ENCODE measurements at regions of chr4 and their contacts with region 1.

Region 1: DNA sequence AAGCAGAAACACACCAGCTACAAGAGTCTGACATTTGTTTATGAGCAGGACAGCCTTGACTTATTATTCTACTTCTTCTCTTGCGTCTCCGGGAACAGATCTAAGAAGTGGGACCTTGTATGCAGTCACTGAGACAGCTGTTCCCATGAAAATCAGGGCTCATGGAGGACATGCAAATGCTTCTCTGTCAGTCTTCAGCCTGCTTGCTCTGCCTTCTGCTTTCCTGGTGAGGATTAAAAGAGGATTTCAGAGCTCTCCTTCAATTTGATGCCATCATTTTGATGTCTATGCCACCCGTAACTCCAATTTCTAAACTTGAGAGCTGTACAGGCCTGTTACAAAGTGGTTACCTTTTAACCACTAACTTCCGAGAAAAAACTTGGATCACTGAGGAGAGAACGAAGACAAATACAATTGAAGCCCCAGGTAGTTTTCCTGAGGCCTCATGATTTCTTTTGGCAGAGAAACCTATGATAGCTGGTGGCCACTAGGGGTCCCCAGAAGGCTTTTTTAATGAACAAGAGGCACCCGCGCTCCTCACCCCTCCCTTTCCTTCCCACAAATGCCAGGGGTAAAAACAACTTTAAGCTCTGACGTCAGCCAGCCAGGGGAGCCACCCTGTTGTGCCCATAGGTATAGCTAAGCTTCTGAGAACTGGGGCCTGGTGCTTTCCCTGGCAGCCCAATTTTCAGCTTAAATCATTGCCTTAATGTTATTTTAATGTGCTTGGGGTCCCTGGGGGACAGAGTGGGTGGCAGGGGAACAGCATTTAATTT is 97.0 kb downstream of the DDIT4L start:
- DNase-seq: peak; percentile 73 to 86
- ATAC-seq: peak; percentile 91 to 95 (median 94)
- H3K4me3 ChIP-seq: no peak overlapping the region
- H3K27ac ChIP-seq: peak overlapping the region; percentile 81
- H3K4me1 ChIP-seq: peaks cover 26% of the 10 kb centered on the region
- H3K27me3 ChIP-seq: no peaks in the 10 kb centered on the region
- CTCF ChIP-seq: peak; percentile 84

Region 2: GRCh38 chr4:100189820-100190642 is 96.8 kb after region 1 on chr4 and contains the start of gene DDIT4L:
- intact Hi-C with region 1: loop called in 1 of 2 experiments (anchors 5 kb)
- DNase-seq: peak; percentile 69 to 84
- ATAC-seq: peak; percentile 83 to 87 (median 85)
- H3K4me3 ChIP-seq: peak within 1 kb of the TSS; percentile 90
- H3K27ac ChIP-seq: peak within 1 kb of the TSS; percentile 89
- H3K4me1 ChIP-seq: peaks cover 18% of the 10 kb centered on the region
- H3K27me3 ChIP-seq: no peaks in the 10 kb centered on the region
- CTCF ChIP-seq: no peak
- total RNA-seq, gene DDIT4L: 101 to 403 (median 275) TPM

Region 3: DNA sequence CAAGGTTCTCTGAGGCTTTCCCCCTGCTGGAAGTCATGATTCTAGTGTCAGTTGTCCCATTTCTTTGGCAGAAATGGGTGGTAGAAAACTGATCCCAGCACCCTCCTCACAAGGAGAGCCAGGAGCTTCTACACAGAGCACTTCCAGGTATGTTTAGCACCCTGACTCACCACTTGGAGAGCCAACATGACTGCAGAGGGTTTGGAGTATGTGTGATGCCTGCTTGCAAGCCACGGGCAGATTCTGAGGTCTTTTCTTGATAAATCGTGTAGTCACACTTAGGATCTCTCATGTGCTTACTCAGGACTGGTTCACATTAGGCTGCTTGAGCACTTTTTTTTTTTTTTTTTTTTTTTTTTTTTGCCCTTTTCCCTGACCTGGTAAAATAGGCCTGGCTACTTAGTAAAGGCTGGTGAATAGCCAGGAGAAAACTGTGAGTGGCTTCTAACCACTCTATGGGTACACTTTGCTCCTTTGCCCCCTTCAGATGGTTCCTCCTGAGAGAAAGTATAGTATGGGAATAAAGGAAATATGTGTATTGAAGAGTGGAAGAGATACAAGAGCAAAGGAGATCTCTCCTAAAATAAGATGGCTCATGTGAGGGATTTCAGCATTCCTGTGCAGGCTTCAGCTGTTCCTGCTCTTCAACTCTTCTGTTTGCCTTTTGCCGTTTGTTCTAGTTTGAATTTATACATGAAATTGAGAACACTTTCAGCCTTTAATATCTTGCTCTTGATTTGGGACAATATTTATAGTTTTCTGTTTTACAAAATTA is 320.9 kb after region 1 on chr4:
- intact Hi-C with region 1: loop called (anchors 5 to 10 kb)
- DNase-seq: peak; percentile 14 to 56
- ATAC-seq: peak; percentile 98 to 99 (median 98)
- H3K4me3 ChIP-seq: no peak overlapping the region
- H3K27ac ChIP-seq: peak overlapping the region; percentile 77
- H3K4me1 ChIP-seq: peaks cover 26% of the 10 kb centered on the region
- H3K27me3 ChIP-seq: no peaks in the 10 kb centered on the region
- CTCF ChIP-seq: no peak

Region 4: GRCh38 chr4:100581332-100581731 is 488.1 kb after region 1 on chr4:
- intact Hi-C with region 1: loop called in 1 of 2 experiments (anchors 1 kb)
- DNase-seq: peak; percentile 20 to 58
- ATAC-seq: peak; percentile 96 to 99 (median 98)
- H3K4me3 ChIP-seq: no peak overlapping the region
- H3K27ac ChIP-seq: peak overlapping the region; percentile 89
- H3K4me1 ChIP-seq: peaks cover 8% of the 10 kb centered on the region
- H3K27me3 ChIP-seq: no peaks in the 10 kb centered on the region
- CTCF ChIP-seq: no peak

Region 5: GRCh38 chr4:101356928-101357327 is 1263.6 kb after region 1 on chr4:
- intact Hi-C with region 1: loop called in 1 of 2 experiments (anchors 10 kb)
- DNase-seq: no peak
- ATAC-seq: no peak
- H3K4me3 ChIP-seq: no peak overlapping the region
- H3K27ac ChIP-seq: no peak overlapping the region
- H3K4me1 ChIP-seq: no peaks in the 10 kb centered on the region
- H3K27me3 ChIP-seq: no peaks in the 10 kb centered on the region
- CTCF ChIP-seq: no peak

Measured in psoas muscle (tissue), 8 donors.